Activated CD4-positive, alpha-beta memory T cell treated with anti-CD3 and anti-CD28 coated beads, Interleukin-2, amount 10 ng/mL, durations not matched to agents 7 days and 5 days (primary cell): ENCODE measurements at regions of chr2 and their contacts with region 1.

Region 1: DNA sequence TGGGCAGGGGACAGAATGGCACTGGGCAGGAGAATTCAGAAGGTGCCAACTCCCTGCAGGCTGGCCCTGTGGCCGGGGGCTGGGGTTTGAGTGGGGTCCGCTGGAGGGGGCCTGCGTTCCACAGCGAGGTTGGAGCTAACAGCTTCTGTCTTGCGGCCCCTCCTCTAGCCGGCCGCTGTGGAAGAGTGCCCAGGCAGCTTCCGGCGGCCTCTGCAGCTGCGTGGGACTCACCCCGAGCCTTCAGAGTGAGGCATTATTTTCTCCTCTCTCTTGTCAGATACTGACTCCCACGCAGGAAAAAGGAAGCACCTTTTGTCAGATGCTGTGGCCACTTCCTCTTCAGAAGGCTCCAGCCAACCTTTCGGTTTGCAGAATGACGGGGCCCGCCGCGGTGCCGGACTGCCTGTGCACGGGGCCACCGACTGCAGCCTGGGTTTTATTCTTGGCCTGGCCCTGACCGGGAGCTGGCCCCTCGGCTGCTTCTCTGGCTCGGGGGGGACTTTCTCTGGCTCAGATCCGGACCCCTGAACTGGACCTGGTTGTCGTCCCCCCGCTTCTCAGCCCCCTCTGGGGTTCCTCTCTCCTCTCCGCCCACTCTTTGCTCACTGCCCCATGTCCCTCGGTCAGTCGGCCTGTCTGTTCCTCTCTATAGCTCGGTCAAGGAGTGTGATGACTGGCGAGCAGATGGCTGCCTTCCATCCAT is 40.1 kb downstream of the ARHGAP25 start:
- DNase-seq: peak; percentile 77
- H3K4me3 Mint-ChIP-seq: peak overlapping the region; percentile 80
- H3K27ac Mint-ChIP-seq: peak overlapping the region; percentile 97
- H3K4me1 Mint-ChIP-seq: peaks cover 87% of the 10 kb centered on the region
- H3K27me3 Mint-ChIP-seq: no peaks in the 10 kb centered on the region

Region 2: GRCh38 chr2:68789603-68790002 is 14.9 kb after region 1 on chr2:
- CTCF ChIA-PET with region 1: interaction called, 8 read pairs
- POLR2A ChIA-PET with region 1: interaction called, 13 read pairs
- DNase-seq: no peak
- H3K4me3 Mint-ChIP-seq: no peak overlapping the region
- H3K27ac Mint-ChIP-seq: peak overlapping the region; percentile 27
- H3K4me1 Mint-ChIP-seq: peaks cover 39% of the 10 kb centered on the region
- H3K27me3 Mint-ChIP-seq: no peaks in the 10 kb centered on the region